Posterior vena cava (tissue), 2 donors: ENCODE measurements at regions of chr9 and their contacts with region 1.

Region 1: GRCh38 chr9:70100362-70100761 is 56.7 kb downstream of the MAMDC2 start:
- DNase-seq: no peak

Region 2: GRCh38 chr9:70043689-70044489 is 56.5 kb before region 1 on chr9 and contains the start of gene MAMDC2:
- intact Hi-C with region 1: loop called (anchors 10 kb)
- DNase-seq: peak; percentile 86
- total RNA-seq, gene MAMDC2: 13.4 to 48.1 TPM

Region 3: GRCh38 chr9:70177121-70177520 is 76.8 kb after region 1 on chr9:
- intact Hi-C with region 1: no loop called
- DNase-seq: no peak